ENCODE measurements at regions of chr1 and their contacts with region 1.

Region 1: DNA sequence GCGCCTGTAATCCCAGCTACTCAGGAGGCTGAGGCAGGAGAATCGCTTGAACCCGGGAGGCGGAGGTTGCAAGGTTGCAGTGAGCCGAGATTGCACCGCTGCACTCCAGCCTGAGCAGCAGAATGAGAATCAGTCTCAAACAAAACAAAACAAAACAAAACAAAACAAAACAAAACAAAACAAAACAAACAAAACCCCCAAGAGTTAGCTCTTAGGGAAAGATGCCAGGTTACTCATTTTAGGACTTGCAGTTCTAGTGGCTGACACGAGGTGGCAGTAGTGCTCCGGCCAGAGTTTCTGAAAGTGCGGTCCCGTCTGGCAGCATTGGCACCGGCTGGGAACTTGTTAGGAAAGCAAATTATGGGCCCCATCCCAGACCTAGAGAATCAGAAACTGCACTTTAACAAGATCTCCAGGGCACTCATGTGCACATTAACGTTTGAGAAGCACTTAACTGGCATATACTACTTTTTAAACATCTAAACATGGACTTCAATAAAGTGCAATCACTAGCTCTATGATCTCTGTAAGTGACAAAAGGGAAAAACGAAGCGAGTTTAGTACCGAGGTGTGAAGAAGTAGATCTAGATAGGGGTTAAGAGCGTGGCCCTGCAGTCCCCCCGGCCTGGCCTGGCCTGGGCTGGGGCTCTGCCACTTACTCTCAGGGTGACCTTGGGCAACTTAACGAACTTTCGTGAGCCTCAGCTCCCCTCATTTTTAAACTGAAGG is 41.9 kb upstream of the TNFRSF1B start:
- H3K4me3 Mint-ChIP-seq: no peak overlapping the region
- H3K27ac Mint-ChIP-seq: peak overlapping the region; percentile 93
- H3K4me1 Mint-ChIP-seq: peaks cover 47% of the 10 kb centered on the region
- H3K27me3 Mint-ChIP-seq: no peaks in the 10 kb centered on the region

Region 2: GRCh38 chr1:12143631-12144155 is 18.8 kb after region 1 on chr1:
- intact Hi-C with region 1: no loop called
- H3K4me3 Mint-ChIP-seq: peak overlapping the region; percentile 0
- H3K27ac Mint-ChIP-seq: peak overlapping the region; percentile 93
- H3K4me1 Mint-ChIP-seq: peaks cover 100% of the 10 kb centered on the region
- H3K27me3 Mint-ChIP-seq: no peaks in the 10 kb centered on the region

Region 3: GRCh38 chr1:12166834-12167492 is 42.1 kb after region 1 on chr1 and contains the start of gene TNFRSF1B:
- intact Hi-C with region 1: loop called (anchors 2 kb)
- H3K4me3 Mint-ChIP-seq: peak within 1 kb of the TSS; percentile 100
- H3K27ac Mint-ChIP-seq: peak within 1 kb of the TSS; percentile 93
- H3K4me1 Mint-ChIP-seq: peaks cover 94% of the 10 kb centered on the region
- H3K27me3 Mint-ChIP-seq: no peaks in the 10 kb centered on the region

Region 4: DNA sequence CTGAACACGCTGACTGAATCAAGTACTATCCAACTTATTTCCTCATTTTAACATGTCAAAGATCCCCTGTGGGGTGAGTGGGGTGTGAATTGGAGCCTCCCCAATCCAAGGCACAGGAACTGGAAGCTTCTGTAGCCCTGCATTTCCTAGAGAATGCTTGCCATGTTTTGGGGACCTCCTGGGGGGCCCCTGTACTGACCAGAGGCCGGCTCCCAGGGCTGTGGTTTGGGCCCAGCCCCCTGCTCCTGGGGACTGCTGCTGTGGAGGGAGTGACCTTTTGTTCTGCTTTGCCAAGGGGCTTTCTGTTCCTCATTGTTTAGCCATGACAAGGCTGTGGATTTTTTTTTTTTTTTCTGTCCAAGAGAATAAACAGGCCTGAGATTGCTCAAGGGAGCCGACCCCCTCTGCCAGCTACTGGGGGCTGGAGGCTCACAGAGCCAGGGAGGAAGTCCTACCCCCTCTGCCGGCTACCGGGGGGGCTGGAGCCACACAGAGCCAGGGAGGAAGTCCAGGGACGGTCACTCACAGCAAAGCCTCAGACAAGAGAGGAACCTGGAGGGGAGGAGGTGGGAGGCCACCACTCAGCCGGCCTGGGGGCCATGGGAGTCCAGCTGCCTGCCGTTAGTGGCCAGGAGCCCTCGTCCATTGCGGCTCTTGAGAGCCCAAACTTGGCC is 59.3 kb after region 1 on chr1:
- intact Hi-C with region 1: no loop called
- H3K4me3 Mint-ChIP-seq: peak overlapping the region; percentile 70
- H3K27ac Mint-ChIP-seq: peak overlapping the region; percentile 96
- H3K4me1 Mint-ChIP-seq: peaks cover 95% of the 10 kb centered on the region
- H3K27me3 Mint-ChIP-seq: no peaks in the 10 kb centered on the region

Region 5: DNA sequence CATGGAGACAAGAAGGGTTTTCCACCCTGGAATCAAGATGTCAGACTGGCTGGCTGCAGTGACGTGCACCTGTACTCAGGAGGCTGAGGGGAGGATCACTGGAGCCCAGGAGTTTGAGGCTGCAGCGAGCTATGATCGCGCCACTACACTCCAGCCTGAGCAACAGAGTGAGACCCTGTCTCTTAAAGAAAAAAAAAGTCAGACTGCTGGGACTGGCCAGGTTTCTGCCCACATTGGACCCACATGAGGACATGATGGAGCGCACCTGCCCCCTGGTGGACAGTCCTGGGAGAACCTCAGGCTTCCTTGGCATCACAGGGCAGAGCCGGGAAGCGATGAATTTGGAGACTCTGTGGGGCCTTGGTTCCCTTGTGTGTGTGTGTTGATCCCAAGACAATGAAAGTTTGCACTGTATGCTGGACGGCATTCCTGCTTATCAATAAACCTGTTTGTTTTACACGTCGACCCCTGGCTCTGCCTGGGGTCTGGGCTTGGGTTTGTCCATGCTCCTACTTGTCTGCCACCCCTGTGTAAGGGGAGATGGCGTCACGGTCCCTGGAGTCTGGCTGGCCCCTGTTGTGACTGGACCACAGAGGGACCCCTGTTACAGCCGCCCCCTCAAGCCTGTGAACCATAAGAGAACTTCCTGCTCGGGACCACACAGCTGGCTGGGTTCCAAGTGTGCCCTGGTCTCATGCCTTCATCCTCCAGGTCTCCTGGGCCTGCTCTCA is 84.1 kb after region 1 on chr1:
- intact Hi-C with region 1: loop called (anchors 1 kb)
- H3K4me3 Mint-ChIP-seq: no peak overlapping the region
- H3K27ac Mint-ChIP-seq: peak overlapping the region; percentile 35
- H3K4me1 Mint-ChIP-seq: peaks cover 17% of the 10 kb centered on the region
- H3K27me3 Mint-ChIP-seq: no peaks in the 10 kb centered on the region

Measured in dendritic cell treated with granulocyte-macrophage colony-stimulating factor and Interleukin-4, amounts not matched to agents 40 ng/mL and 50 ng/mL, for 4 days (primary cell).